ENCODE measurements at regions of chr11 and their contacts with region 1.

Region 1: DNA sequence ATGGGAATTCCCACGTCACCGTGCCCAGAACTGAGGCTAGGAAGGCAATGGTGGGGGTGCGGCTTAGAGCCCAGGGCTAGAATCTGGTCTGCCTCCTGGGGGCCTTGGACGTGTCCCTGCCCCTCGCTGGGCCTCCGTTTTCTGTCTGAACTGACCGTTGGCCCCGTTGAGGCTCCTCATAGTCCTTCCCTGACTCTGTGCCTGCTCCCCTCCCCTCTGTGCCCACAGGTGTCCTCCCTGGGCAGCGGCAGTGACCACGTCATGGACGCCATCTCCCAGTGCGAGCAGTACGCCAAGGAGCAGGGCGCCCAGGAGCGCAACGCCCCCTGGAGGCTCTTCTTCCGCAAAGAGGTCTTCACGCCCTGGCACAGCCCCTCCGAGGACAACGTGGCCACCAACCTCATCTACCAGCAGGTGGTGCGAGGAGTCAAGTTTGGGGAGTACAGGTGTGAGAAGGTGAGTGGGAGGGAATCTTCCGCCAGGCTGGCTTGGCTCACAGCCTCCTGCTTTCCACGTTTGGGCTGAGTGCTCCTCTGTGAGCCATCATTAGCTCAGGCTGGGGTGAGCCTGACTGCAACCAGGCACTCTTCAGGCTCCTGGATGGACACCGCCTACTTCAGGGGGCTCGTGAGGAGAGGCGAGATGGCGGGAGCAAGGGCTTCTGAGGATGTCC is 63.9 kb downstream of the MYO7A start:
- DNase-seq: peak; percentile 86
- ATAC-seq: peak; percentile 83
- H3K4me3 ChIP-seq: no peak overlapping the region
- H3K27ac ChIP-seq: no peak overlapping the region
- H3K4me1 ChIP-seq: peaks cover 3% of the 10 kb centered on the region
- H3K27me3 ChIP-seq: no peaks in the 10 kb centered on the region
- CTCF ChIP-seq: peak; percentile 52

Region 2: GRCh38 chr11:77557554-77557953 is 365.6 kb after region 1 on chr11:
- intact Hi-C with region 1: loop called (anchors 10 kb)
- DNase-seq: no peak
- ATAC-seq: no peak
- H3K4me3 ChIP-seq: no peak overlapping the region
- H3K27ac ChIP-seq: no peak overlapping the region
- H3K4me1 ChIP-seq: no peaks in the 10 kb centered on the region
- H3K27me3 ChIP-seq: no peaks in the 10 kb centered on the region
- CTCF ChIP-seq: no peak